Cardiac septum (tissue), 1 donor: ENCODE measurements at regions of chr3 and their contacts with region 1.

Region 1: GRCh38 chr3:42256135-42256819 is 9.7 kb downstream of the CCK start:
- DNase-seq: no peak

Region 2: GRCh38 chr3:42289026-42289425 is 32.7 kb after region 1 on chr3:
- intact Hi-C with region 1: no loop called
- DNase-seq: no peak

Region 3: GRCh38 chr3:42547401-42547945 is 291.2 kb after region 1 on chr3:
- intact Hi-C with region 1: loop called (anchors 5 kb)
- DNase-seq: peak; percentile 89

Region 4: GRCh38 chr3:42755681-42756578 is 499.7 kb after region 1 on chr3:
- intact Hi-C with region 1: loop called (anchors 10 kb)
- DNase-seq: no peak